ENCODE measurements at regions of chr6 and their contacts with region 1.

Region 1: DNA sequence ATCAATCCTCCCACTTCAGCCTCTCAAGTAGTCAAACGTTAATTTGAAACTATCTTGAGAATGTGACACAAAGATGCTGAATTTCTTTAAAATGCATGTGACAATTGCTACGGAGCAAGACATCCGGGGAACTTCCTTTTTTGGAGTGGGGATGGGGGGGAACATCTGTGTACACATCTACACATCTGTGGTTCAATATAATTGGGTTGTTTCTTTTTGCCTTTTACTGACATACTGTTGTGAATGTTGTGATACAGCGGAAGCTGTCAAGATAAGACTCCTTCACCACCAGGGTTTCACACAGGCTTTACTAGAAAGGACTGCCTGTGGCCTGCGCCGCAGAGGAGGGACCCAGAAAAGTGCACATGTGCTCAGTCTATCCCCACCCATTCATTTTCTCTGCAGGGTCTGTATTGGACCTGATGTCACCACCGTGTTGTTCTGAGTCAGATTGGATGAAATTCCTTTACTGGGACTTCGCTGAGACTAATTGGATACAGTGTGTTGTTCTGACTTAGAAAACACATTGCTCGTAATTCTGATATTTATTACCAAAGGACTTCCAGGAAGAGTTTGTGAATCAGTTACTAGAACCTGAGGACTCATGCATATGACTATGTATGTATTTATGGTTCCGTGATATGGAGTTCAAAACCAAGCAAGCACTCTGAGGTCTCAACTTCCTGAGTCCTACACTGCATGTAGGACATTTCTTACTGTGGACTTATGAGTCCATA is 98.7 kb upstream of the SGK1 start:
- DNase-seq: no peak
- ATAC-seq: no peak

Region 2: GRCh38 chr6:134347916-134348805 is 68.4 kb before region 1 on chr6:
- intact Hi-C with region 1: loop called (anchors 10 kb)
- DNase-seq: no peak
- ATAC-seq: peak; percentile 70